ENCODE measurements at regions of chr16 and their contacts with region 1.

Region 1: DNA sequence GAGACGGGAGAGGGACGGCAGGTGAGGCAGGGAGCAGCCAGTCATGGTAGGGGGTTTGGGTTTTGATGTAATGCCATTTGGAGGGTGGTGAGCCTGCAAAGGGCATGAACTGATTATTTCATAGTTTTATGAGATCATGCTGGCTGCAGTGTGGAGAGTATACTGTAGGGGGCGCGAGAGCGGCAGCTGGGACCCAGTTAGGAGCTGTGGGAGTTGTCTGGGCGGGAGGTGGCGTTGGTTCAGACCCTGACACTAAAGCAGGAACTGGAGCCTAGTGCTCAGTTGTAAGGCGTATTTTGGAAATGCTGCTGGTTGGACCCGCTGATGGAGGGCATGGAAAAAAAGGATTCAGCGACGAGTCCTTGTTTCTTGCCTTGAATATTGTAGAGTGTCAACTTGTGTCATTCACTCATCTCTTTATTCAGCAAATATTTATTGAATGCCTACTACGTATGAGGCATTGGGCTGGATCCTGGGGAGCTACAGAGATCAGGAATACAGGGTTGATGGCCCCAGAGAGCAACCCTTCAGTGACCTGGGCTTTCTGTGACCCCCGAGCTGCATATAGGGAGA is 23.7 kb upstream of the KDM8 start:
- DNase-seq: peak; percentile 88
- CTCF ChIP-seq: peak; percentile 95

Region 2: GRCh38 chr16:27080870-27081269 is 98.7 kb before region 1 on chr16:
- CTCF ChIA-PET with region 1: no interaction called
- POLR2A ChIA-PET with region 1: no interaction called
- DNase-seq: no peak
- CTCF ChIP-seq: peak; percentile 14

Region 3: GRCh38 chr16:27164352-27164751 is 15.2 kb before region 1 on chr16:
- CTCF ChIA-PET with region 1: interaction called, 24 read pairs
- POLR2A ChIA-PET with region 1: no interaction called
- DNase-seq: no peak
- CTCF ChIP-seq: no peak

Region 4: DNA sequence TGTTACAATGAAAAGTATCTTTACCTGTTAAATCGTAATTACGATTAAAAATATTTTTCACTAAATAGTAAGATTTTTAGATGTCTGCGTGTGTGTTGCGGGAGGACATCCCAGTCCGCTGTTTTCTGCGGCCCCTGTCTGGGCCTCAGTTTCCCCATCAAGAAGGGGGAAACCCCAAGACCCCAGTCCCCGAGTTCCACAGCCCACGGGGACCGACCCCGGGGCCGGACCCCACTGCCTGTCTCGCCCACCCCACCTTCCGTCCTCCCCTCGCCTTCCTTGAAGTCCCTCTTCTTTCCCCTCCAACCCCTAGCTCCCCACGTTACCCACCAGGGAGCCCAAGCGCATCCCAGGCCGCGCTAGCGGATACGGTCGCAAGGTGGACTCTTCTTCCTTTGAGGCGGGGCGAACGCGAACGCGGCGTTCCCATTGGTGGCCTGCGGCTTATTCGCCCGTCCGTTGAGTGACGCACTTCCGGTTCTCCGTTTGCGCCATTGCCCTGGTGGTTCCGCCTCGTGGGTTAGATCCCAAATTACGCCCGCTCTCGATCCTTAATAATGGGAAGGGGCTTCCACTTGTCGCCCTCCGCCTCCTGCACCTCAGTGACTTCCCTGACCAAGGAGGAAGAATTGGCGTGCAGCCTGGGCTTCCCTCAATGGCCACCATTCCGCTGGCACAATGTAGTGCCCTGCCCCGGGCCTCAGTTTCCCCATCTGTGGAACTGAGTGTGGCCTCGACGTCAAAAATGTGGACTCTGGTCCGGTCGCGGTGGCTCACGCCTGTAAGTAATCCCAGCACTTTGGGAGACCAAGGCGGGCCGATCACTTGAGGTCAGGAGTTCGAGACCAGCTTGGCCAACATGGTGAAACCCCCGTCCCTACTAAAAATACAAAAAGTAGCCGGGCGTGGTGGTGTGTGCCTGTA is 89.1 kb after region 1 on chr16 and contains the start of gene NSMCE1:
- CTCF ChIA-PET with region 1: interaction called, 10 read pairs
- POLR2A ChIA-PET with region 1: no interaction called
- DNase-seq: peak; percentile 97
- CTCF ChIP-seq: no peak

Region 5: GRCh38 chr16:27374804-27375425 is 195.3 kb after region 1 on chr16:
- CTCF ChIA-PET with region 1: interaction called, 15 read pairs
- POLR2A ChIA-PET with region 1: no interaction called
- DNase-seq: peak; percentile 74
- CTCF ChIP-seq: peak; percentile 38

Region 6: DNA sequence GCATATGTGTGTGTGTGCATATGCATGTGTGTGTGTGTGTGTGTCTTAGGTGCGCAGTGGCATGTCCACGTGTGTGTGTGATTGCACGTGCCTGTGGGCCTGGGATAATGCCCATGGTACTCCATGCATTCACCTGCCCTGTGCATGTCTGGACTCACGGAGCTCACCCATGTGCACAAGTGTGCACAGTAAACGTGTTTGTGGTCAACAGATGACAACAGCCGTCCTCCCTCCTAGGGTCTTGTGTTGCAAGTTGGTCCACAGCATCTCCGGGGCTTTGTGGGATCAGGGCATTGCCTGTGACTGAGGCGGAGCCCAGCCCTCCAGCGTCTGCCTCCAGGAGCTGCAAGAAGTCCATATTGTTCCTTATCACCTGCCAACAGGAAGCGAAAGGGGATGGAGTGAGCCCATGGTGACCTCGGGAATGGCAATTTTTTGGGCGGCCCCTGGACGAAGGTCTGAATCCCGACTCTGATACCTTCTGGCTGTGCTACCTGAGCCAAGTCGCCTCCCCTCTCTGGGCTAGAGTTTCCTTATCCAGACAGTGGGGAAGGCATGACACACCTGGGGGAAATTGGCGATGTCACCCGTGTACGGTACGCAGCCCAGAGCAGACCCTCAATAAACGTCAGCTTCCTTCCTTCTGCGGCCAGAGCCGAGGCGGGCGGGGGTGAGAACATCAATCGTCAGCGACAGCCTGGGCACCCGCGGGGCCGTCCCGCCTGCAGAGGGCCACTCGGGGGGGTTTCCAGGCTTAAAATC is 270.0 kb after region 1 on chr16:
- CTCF ChIA-PET with region 1: interaction called, 28 read pairs
- POLR2A ChIA-PET with region 1: no interaction called
- DNase-seq: peak; percentile 86
- CTCF ChIP-seq: no peak

Region 7: GRCh38 chr16:27464626-27465482 is 285.3 kb after region 1 on chr16:
- CTCF ChIA-PET with region 1: interaction called, 24 read pairs
- POLR2A ChIA-PET with region 1: no interaction called
- DNase-seq: no peak
- CTCF ChIP-seq: no peak